Dorsolateral prefrontal cortex (tissue), 120 donors: ENCODE measurements at regions of chr1 and their contacts with region 1.

Region 1: DNA sequence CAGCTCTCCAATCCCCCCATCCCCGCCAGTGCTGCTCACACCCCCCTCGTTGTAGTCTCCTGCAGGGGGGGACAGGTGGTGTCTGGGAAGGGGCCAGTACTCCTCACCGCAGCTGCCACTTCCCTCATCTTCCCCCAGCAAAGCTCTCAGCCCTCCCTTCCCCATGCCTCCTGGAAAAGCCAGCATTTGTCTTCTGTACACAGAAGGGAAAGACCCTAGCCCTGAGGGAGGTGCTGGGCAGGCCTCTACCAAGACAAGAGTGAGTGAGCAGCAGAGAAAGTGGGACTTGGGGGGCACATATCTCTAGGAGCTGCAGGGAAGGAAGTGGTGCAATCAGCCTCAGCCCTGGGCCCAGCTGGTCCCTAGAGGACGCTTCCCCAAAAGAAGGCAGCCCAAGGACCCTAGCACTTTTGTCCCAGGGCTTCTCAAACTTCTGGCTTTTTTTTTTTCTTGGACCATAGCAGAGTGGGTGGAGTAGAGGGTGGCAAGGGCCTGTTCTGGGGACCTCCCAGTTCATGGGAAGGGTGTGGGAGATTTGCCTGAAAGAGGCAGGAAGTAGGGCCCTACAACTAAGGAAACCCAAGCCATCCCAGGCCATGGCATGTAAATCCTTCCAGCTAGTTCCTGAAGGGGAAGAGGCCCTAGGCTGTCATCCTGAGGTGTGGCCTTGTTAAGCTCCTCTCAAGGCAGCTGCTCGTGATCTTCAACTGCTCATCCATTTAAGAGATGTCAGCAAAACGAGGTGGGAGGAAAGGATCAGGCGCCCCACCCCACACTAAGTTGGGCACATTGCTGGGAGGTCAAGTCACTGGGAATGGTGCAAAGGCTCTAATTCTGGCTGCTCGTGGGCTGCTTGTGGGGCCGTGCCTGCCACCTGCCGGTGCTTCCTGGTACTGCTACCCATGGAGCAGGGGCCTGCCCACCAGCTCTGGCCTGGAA is 12.6 kb downstream of the ZC3H12A start:
- DNase-seq: peak in 9 of 10 donors; percentile 61 to 85 (median 72)
- H3K4me3 ChIP-seq: no peak overlapping the region
- H3K27ac ChIP-seq: peak overlapping the region in 25 of 59 donors; percentile 2 to 67 (median 29)
- H3K27me3 ChIP-seq: no peaks in the 10 kb centered on the region
- CTCF ChIP-seq: peak; percentile 90 to 100 (median 98)

Region 2: GRCh38 chr1:37250371-37250770 is 236.6 kb before region 1 on chr1:
- intact Hi-C with region 1: no loop called
- DNase-seq: no peak
- H3K4me3 ChIP-seq: no peak overlapping the region
- H3K27ac ChIP-seq: no peak overlapping the region
- H3K27me3 ChIP-seq: peaks cover 0 to 18% (median 0%) of the 10 kb centered on the region in 45 donors
- CTCF ChIP-seq: no peak

Region 3: GRCh38 chr1:37449936-37450335 is 37.0 kb before region 1 on chr1:
- intact Hi-C with region 1: loop called (anchors 1 to 2 kb)
- DNase-seq: no peak
- H3K4me3 ChIP-seq: no peak overlapping the region
- H3K27ac ChIP-seq: no peak overlapping the region
- H3K27me3 ChIP-seq: peaks cover 0 to 4% (median 0%) of the 10 kb centered on the region in 45 donors
- CTCF ChIP-seq: no peak

Region 4: DNA sequence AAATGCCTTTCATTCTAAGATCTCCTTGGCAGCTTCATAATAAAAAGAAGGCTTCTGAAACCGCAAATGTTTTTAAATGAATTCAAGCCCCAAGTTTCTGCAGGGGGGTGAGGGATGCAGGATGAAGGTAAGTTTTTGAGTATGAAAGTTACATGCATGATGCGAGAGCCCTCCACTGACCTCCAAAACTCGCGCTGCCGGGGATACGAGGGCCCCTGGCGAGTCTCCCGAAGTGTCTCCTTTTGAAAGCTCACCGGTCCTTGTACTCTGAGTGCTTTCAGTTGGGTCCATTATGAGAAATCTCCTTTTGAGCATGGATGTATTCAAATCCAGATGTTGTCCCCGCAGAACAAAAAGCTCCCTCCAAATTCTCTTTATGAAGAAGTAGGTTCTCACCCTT is 31.4 kb before region 1 on chr1:
- intact Hi-C with region 1: loop called (anchors 1 to 2 kb)
- DNase-seq: no peak
- H3K4me3 ChIP-seq: peak overlapping the region in 4 of 59 donors; percentile 12 to 41 (median 24)
- H3K27ac ChIP-seq: peak overlapping the region in 1 of 59 donors; percentile 25
- H3K27me3 ChIP-seq: no peaks in the 10 kb centered on the region
- CTCF ChIP-seq: no peak

Region 5: DNA sequence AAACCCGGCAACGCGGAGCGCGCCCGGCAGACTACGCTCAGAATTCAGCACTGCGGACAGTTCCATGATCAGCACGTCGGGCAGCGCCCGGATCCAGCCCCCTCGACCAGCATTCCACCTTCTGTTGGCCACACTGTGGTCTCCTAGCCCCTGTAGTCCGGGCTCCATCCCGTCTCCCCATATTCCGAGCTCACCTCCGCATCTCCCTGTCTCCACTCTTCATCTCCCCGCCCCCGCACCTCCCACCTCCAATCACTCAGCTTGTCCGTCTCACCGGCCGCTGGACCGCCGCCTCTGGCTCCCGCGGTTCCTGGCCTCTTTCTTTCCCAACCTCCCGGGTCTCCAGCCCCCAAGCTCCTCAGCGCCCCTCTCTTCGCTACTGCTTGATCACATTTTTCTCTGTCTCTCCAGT is 277.5 kb after region 1 on chr1:
- intact Hi-C with region 1: no loop called
- DNase-seq: peak in 6 of 10 donors; percentile 28 to 79 (median 54)
- H3K4me3 ChIP-seq: peak overlapping the region in 58 of 59 donors; percentile 7 to 68 (median 54)
- H3K27ac ChIP-seq: peak overlapping the region in 21 of 59 donors; percentile 9 to 74 (median 52)
- H3K27me3 ChIP-seq: peaks cover 0 to 68% (median 36%) of the 10 kb centered on the region in 45 donors
- CTCF ChIP-seq: peak in 1 of 56 donors; percentile 9

Region 6: GRCh38 chr1:38046884-38047602 is 560.1 kb after region 1 on chr1:
- intact Hi-C with region 1: no loop called
- DNase-seq: peak; percentile 70 to 93 (median 90)
- H3K4me3 ChIP-seq: peak overlapping the region; percentile 49 to 81 (median 68)
- H3K27ac ChIP-seq: peak overlapping the region in 39 of 59 donors; percentile 1 to 73 (median 51)
- H3K27me3 ChIP-seq: peaks cover 0 to 39% (median 22%) of the 10 kb centered on the region in 45 donors
- CTCF ChIP-seq: peak in 28 of 56 donors; percentile 6 to 47 (median 26)